Caco-2 (cell line): ENCODE measurements at regions of chr16 and their contacts with region 1.

Region 1: DNA sequence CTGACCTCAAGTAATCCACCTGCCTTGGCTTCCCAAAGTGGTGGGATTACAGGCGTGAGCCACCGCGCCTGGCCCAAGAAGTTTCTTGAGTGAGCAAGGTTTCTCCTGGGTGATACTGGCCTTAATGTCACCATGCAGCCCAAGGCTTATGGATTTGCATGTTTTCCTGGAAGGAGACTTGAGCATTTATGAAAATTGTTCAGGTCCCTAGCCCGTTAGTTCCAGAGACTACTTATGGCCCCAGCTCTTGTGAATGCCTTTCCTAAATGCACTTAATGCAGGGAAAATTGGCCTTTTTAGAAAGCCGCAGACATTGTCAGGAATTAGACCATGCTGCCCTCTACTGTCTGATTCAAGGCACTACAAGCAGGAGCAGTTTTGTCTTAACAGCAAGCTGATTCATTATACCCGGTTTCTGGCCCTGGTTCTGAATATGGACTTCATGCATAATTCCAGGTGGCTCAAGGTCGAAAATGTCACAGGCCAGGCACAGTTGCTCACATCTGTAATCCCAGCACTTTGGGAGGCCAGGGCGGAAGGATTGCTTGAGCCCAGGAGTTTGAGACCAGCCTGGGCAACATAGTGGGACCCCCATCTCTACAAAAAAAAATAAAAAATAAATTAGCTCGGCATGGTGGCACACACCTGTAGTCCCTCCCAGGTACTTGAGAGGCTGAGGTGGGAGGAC is 91.3 kb downstream of the SNX29 start:
- DNase-seq: peak; percentile 52 to 64
- H3K4me3 ChIP-seq: no peak overlapping the region
- H3K4me3 Mint-ChIP-seq: no peak overlapping the region
- H3K27ac Mint-ChIP-seq: no peak overlapping the region
- H3K4me1 ChIP-seq: no peaks in the 10 kb centered on the region
- H3K4me1 Mint-ChIP-seq: no peaks in the 10 kb centered on the region
- H3K27me3 ChIP-seq: no peaks in the 10 kb centered on the region
- H3K27me3 Mint-ChIP-seq: no peaks in the 10 kb centered on the region
- CTCF ChIP-seq: peak; percentile 84 to 86

Region 2: GRCh38 chr16:11871193-11871592 is 196.7 kb before region 1 on chr16:
- CTCF ChIA-PET with region 1: interaction called, 4 read pairs
- POLR2A ChIA-PET with region 1: no interaction called
- intact Hi-C with region 1: loop called (anchors 5 kb)
- DNase-seq: peak; percentile 35 to 37
- H3K4me3 ChIP-seq: no peak overlapping the region
- H3K4me3 Mint-ChIP-seq: no peak overlapping the region
- H3K27ac Mint-ChIP-seq: no peak overlapping the region
- H3K4me1 ChIP-seq: no peaks in the 10 kb centered on the region
- H3K4me1 Mint-ChIP-seq: no peaks in the 10 kb centered on the region
- H3K27me3 ChIP-seq: no peaks in the 10 kb centered on the region
- H3K27me3 Mint-ChIP-seq: no peaks in the 10 kb centered on the region
- CTCF ChIP-seq: peak in 1 of 2 experiments; percentile 18

Region 3: DNA sequence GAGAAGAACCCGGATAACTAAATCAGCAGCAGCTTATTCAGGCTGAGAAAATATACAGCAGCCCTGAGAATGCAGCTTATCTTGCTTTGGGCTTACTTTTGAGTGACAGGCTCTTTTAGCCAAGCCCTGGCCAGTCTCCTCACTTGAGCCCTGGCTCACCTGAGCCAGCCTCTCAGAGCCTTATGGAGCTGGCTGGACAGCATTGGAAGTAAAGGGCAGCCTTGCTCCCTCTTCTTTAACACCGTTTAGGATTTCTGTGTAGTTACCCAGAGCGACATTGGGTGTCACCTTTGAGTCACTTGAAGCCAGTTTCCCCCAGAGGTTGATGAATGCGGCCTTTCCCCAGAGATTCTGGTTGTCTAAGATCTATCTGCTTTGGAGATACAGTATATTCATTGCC is 118.3 kb before region 1 on chr16:
- CTCF ChIA-PET with region 1: interaction called, 29 read pairs
- POLR2A ChIA-PET with region 1: no interaction called
- intact Hi-C with region 1: loop called (anchors 1 kb)
- DNase-seq: peak; percentile 56 to 68
- H3K4me3 ChIP-seq: no peak overlapping the region
- H3K4me3 Mint-ChIP-seq: no peak overlapping the region
- H3K27ac Mint-ChIP-seq: no peak overlapping the region
- H3K4me1 ChIP-seq: no peaks in the 10 kb centered on the region
- H3K4me1 Mint-ChIP-seq: no peaks in the 10 kb centered on the region
- H3K27me3 ChIP-seq: no peaks in the 10 kb centered on the region
- H3K27me3 Mint-ChIP-seq: no peaks in the 10 kb centered on the region
- CTCF ChIP-seq: peak; percentile 23 to 51

Region 4: GRCh38 chr16:11972128-11972527 is 95.7 kb before region 1 on chr16:
- CTCF ChIA-PET with region 1: interaction called, 10 read pairs
- POLR2A ChIA-PET with region 1: interaction called, 4 read pairs
- intact Hi-C with region 1: loop called (anchors 1 kb)
- DNase-seq: peak in 1 of 2 experiments; percentile 34
- H3K4me3 ChIP-seq: no peak overlapping the region
- H3K4me3 Mint-ChIP-seq: no peak overlapping the region
- H3K27ac Mint-ChIP-seq: no peak overlapping the region
- H3K4me1 ChIP-seq: no peaks in the 10 kb centered on the region
- H3K4me1 Mint-ChIP-seq: peaks cover 9% of the 10 kb centered on the region
- H3K27me3 ChIP-seq: no peaks in the 10 kb centered on the region
- H3K27me3 Mint-ChIP-seq: no peaks in the 10 kb centered on the region
- CTCF ChIP-seq: peak in 1 of 2 experiments; percentile 44

Region 5: DNA sequence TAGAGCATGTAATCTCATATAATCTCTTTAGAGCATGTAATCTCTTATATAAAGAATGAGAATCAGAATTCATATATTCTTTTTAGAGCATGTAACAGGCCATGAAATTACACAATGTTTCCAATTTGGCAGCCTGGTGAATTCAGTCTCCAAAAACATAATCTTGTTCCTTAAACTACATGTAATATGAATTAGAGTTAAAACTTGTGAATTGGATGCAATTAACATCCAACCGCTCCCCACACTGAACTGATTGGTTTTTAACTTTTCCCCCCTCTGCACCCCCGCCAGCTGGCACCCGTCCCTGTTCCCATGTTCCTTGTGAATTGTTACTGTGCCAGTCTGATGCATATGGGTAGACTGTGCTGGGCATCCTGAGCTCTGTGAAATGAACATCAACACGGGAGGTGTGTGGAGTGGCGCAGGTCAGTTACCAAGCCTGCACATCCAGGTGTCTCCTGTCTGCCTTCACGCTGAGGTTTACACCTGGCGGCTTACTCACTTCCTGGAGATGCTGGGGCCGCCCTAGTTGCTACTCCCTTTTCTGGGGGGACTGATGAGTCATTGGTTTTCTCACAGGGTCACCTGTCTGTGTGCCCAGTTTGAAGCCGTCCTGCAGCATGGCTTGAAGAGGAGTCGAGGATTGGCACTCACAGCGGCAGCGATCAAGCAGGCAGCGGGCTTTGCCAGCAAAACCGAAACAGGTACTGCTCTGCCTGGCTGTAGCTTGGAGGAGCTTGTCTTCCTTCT is 40.9 kb before region 1 on chr16:
- CTCF ChIA-PET with region 1: no interaction called
- POLR2A ChIA-PET with region 1: no interaction called
- intact Hi-C with region 1: no loop called
- DNase-seq: no peak
- H3K4me3 ChIP-seq: no peak overlapping the region
- H3K4me3 Mint-ChIP-seq: no peak overlapping the region
- H3K27ac Mint-ChIP-seq: no peak overlapping the region
- H3K4me1 ChIP-seq: peaks cover 21% of the 10 kb centered on the region
- H3K4me1 Mint-ChIP-seq: peaks cover 17% of the 10 kb centered on the region
- H3K27me3 ChIP-seq: no peaks in the 10 kb centered on the region
- H3K27me3 Mint-ChIP-seq: no peaks in the 10 kb centered on the region
- CTCF ChIP-seq: no peak

Region 6: GRCh38 chr16:12124742-12125141 is 56.9 kb after region 1 on chr16:
- CTCF ChIA-PET with region 1: no interaction called
- POLR2A ChIA-PET with region 1: no interaction called
- intact Hi-C with region 1: no loop called
- DNase-seq: no peak
- H3K4me3 ChIP-seq: no peak overlapping the region
- H3K4me3 Mint-ChIP-seq: no peak overlapping the region
- H3K27ac Mint-ChIP-seq: no peak overlapping the region
- H3K4me1 ChIP-seq: no peaks in the 10 kb centered on the region
- H3K4me1 Mint-ChIP-seq: no peaks in the 10 kb centered on the region
- H3K27me3 ChIP-seq: no peaks in the 10 kb centered on the region
- H3K27me3 Mint-ChIP-seq: no peaks in the 10 kb centered on the region
- CTCF ChIP-seq: no peak